CD4-positive, alpha-beta T cell (primary cell): ENCODE measurements at regions of chr20 and their contacts with region 1.

Region 1: DNA sequence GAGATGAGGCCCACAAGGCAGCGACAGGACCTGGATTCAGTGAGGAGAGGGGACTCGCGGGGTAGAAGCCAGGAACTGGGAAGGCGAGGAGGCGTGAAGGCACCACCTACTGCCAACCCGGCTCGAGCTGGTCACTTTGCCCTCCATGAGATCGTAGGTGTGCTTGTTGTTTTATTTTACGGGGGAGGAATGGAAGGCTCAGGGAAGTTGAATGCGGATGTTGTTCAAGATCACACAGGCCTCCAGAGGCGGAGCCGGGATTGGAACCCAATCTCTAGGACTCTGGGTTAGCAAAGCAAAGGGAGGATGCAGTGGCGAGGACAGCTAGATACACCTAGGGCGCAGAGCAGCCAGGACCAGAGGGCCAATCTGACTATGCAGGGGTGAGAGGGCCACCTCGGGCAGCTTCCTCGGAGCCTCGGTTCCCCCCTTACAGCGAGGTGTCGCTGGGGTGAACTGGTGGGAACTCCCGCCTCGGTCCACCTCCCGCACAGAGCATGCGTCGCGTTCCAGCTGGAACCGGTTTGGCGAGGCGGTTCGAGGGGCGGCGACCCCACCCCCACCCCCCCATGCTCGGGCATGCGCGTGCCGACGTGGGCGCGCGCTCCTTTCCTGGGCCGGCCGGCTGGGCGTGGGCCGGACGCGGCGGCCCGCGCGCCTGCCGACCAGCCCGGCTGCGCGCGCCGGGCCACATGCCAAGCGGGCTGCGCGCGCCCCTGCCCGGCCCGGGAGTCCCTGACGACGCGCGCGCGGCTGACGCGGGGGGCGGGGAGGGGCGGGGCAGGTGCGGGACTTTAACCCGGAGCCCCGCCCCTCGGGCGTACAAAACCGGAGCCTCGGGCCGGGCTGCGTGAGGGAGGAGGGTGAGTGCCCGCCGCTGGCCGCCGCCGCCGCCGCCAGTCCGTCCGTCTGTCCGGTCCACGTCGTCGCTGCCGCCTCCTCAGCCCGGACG is 80.4 kb upstream of the MYL9 start:
- DNase-seq: peak; percentile 79 to 98 (median 90)
- ATAC-seq: peak; percentile 75
- H3K4me3 ChIP-seq: peak overlapping the region; percentile 82
- H3K4me3 Mint-ChIP-seq: peak overlapping the region; percentile 89
- H3K27ac ChIP-seq: peak overlapping the region; percentile 76 to 93
- H3K27ac Mint-ChIP-seq: peak overlapping the region; percentile 84
- H3K4me1 ChIP-seq: peaks cover 50% of the 10 kb centered on the region
- H3K4me1 Mint-ChIP-seq: peaks cover 50% of the 10 kb centered on the region
- H3K27me3 ChIP-seq: no peaks in the 10 kb centered on the region
- H3K27me3 Mint-ChIP-seq: no peaks in the 10 kb centered on the region
- CTCF ChIP-seq: no peak

Region 2: DNA sequence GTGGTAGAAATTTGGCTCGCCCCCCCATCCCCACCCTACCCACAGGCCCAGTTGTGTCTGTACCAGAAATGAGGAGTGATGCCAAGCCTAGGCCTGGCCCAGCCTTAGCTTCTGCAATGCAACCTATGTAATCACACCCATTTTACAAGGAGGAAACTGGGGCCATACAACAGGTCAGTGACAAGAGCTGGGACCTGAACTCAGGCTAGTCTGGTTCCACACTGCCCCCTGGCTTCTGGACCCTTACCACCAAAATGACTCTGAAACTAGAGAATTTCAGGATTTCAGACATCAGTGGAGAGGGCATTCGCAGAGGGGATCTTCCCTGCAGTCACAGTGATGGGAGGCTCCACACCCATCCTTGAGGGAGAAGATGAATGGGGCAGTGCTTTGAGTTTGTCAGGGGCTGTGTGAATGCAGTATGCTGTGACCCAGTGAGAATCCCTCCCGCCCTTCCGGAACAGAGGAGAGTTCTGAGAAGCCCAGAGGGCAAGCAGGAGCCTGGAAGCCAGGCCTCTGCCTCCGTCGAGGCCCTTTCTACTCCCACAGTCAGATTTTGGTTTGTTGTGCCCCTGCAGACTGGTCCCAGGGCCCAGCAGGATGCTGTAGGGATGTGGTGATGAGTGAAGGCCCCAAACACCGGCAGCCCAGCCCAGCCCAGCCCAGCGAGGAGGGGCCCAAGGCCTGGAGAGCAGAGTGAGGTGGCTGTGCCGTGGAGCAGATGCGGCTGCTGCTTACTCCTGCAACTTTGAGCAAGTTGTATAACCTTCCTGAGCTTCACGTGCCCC is 32.3 kb after region 1 on chr20:
- CTCF ChIA-PET with region 1: interaction called, 5 read pairs
- POLR2A ChIA-PET with region 1: interaction called, 11 read pairs
- intact Hi-C with region 1: no loop called
- DNase-seq: peak in 5 of 14 experiments; percentile 11 to 43 (median 32)
- ATAC-seq: no peak
- H3K4me3 ChIP-seq: no peak overlapping the region
- H3K4me3 Mint-ChIP-seq: no peak overlapping the region
- H3K27ac ChIP-seq: peak overlapping the region in 1 of 2 donors; percentile 88
- H3K27ac Mint-ChIP-seq: peak overlapping the region; percentile 88
- H3K4me1 ChIP-seq: peaks cover 46% of the 10 kb centered on the region
- H3K4me1 Mint-ChIP-seq: peaks cover 45% of the 10 kb centered on the region
- H3K27me3 ChIP-seq: no peaks in the 10 kb centered on the region
- H3K27me3 Mint-ChIP-seq: no peaks in the 10 kb centered on the region
- CTCF ChIP-seq: no peak

Region 3: GRCh38 chr20:36641506-36641843 is 180.6 kb after region 1 on chr20:
- CTCF ChIA-PET with region 1: no interaction called
- POLR2A ChIA-PET with region 1: no interaction called
- intact Hi-C with region 1: no loop called
- DNase-seq: no peak
- ATAC-seq: no peak
- H3K4me3 ChIP-seq: no peak overlapping the region
- H3K4me3 Mint-ChIP-seq: no peak overlapping the region
- H3K27ac ChIP-seq: peak overlapping the region in 1 of 2 donors; percentile 15
- H3K27ac Mint-ChIP-seq: peak overlapping the region; percentile 83
- H3K4me1 ChIP-seq: peaks cover 53% of the 10 kb centered on the region
- H3K4me1 Mint-ChIP-seq: peaks cover 54% of the 10 kb centered on the region
- H3K27me3 ChIP-seq: no peaks in the 10 kb centered on the region
- H3K27me3 Mint-ChIP-seq: no peaks in the 10 kb centered on the region
- CTCF ChIP-seq: no peak

Region 4: DNA sequence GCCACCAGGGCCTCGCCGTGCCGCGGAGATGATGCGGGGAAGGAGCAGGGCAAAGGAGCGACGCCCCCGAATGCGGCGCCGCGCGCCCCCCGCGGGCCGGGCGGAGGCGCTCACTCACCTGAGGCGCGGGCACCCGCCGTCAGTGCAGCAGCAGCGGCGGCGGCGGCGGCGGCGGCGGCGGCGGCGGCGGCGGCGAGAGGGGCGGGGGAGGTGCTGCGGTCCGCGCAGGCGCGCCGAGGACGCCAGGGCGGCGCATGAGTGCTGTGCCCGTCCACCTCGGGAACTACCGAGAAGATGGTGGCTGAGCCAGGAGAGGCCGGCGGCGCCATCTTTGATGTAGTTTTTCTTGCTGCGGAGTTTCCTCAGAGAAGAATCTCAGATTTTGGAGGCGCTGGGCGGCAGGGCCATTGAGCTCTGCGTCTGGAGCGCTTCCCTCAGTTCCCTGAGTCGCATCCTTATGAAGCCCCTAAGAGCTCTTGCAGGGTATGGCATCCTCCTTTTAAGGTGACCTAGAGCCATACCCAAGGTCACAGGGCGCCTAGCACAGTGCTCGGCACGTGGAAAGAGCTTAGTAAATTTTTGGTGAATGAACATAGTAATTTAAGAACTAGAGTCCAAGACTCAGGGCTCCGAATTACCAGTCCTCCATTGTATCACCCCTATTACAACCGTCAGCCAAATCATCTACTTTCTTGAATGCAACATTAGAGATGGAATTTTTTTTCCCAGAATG is 285.2 kb after region 1 on chr20 and contains the start of gene NDRG3:
- CTCF ChIA-PET with region 1: no interaction called
- POLR2A ChIA-PET with region 1: interaction called, 4 read pairs
- intact Hi-C with region 1: loop called in 1 of 2 experiments (anchors 5 kb)
- DNase-seq: peak; percentile 84 to 97 (median 91)
- ATAC-seq: peak; percentile 98
- H3K4me3 ChIP-seq: peak within 1 kb of the TSS; percentile 92
- H3K4me3 Mint-ChIP-seq: peak within 1 kb of the TSS; percentile 90
- H3K27ac ChIP-seq: peak within 1 kb of the TSS in 1 of 2 donors; percentile 49
- H3K27ac Mint-ChIP-seq: peak within 1 kb of the TSS; percentile 89
- H3K4me1 ChIP-seq: peaks cover 22% of the 10 kb centered on the region
- H3K4me1 Mint-ChIP-seq: peaks cover 21% of the 10 kb centered on the region
- H3K27me3 ChIP-seq: no peaks in the 10 kb centered on the region
- H3K27me3 Mint-ChIP-seq: no peaks in the 10 kb centered on the region
- CTCF ChIP-seq: no peak
- total RNA-seq, gene NDRG3: 17.3 to 17.5 TPM